GM10248 (cell line): ENCODE measurements at regions of chr19 and their contacts with region 1.

Region 1: DNA sequence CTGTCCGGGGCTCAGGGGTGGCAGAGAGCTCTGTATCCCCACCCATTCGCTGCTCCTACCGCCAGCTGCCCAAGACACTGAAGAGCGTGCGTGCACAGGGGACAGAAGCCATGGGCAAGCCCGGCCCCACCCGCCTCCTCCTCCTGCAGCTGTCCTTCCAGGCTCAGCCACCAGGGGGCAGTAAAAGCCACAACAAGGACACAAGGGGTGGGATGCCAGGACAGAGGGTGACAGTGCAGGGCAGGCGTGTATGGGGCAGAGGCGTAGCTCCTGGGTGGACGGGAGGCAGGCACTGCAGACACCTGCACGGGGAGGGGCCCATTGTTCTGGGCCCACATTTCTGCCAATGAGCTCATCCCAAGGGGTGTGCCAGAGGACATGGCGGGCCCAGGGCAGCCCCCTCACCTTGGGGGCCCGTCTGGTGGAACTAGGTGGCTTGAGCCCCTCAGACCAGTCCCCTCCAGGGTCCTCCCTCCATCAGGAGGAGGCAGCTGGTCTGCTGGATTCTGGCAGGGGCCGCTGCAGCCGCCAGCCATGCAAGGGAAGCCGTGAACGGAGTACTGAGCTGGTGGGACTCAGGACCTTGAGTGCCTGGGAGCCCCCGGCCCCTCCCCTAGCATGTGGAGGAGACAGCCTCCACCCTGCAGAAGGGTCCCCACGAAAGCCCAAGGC is 61.1 kb downstream of the MLLT1 start:
- DNase-seq: peak; percentile 94
- CTCF ChIP-seq: peak; percentile 97

Region 2: DNA sequence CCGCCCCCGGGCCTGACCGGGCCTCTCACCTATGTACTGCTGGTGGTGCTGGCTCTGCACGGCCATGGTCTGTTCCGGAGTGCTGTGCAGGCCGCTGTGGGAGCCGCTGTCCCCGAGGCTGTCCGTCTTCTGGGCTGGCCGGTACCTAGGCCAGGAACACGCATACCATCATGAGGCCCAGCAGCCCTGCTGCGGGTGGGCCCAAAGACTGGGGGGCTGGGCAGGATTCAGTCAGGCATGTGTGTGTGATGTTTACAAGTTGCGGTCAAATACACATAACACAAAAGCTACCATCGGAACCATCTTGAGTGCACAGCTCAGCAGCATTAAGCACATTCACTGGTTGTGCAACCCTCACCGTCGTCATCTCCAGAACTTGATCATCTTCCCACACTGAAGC is 208.5 kb before region 1 on chr19:
- CTCF ChIA-PET with region 1: no interaction called
- POLR2A ChIA-PET with region 1: no interaction called
- DNase-seq: no peak
- CTCF ChIP-seq: no peak

Region 3: DNA sequence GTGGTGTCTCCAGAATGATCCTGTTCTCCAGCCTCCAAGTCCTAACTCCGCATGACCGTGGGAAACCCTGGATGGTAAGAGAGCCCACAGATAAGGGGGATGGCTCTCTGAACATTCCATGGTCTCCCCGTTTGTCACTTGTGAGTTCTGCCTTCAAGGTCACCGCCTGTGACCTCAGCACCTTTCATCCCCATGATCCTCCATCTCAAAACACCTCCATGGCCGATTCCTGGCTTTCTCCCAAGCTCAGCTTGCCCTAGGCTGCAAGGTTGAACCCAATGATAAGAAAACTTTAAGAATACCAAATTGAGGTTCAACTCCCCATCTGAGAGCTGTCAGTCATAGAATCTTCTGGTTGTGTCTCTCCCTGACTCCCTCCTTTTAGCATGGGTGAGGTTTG is 35.3 kb before region 1 on chr19:
- CTCF ChIA-PET with region 1: interaction called, 11 read pairs
- POLR2A ChIA-PET with region 1: no interaction called
- DNase-seq: no peak
- CTCF ChIP-seq: no peak

Region 4: GRCh38 chr19:6250024-6250615 is 31.5 kb after region 1 on chr19:
- CTCF ChIA-PET with region 1: interaction called, 10 read pairs
- POLR2A ChIA-PET with region 1: no interaction called
- DNase-seq: no peak
- CTCF ChIP-seq: no peak

Region 5: GRCh38 chr19:6287269-6287885 is 68.8 kb after region 1 on chr19:
- CTCF ChIA-PET with region 1: interaction called, 13 read pairs
- POLR2A ChIA-PET with region 1: no interaction called
- DNase-seq: no peak
- CTCF ChIP-seq: no peak

Region 6: GRCh38 chr19:6354098-6354674 is 135.6 kb after region 1 on chr19:
- CTCF ChIA-PET with region 1: interaction called, 11 read pairs
- POLR2A ChIA-PET with region 1: no interaction called
- DNase-seq: no peak
- CTCF ChIP-seq: no peak